GM23248 (cell line): ENCODE measurements at regions of chr1 and their contacts with region 1.

Region 1: DNA sequence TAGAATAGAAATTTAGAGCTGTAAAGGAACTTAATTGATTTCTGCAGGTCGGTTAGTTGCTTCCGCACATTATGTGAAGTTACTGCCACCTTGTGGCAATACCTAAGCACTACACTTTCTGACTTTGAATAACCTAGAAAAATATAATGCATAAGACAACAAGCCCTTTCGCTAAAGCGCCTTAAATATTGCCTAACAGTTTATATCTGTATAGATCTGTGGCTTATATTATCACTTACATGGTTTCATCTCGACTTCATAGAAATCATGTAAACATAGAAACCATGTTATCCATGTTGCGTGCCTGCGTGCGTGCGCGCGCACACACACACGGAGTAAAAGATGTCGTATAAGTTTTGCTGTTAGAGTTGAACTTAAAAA is 10.9 kb upstream of the IFI16 start:
- DNase-seq: peak; percentile 78
- H3K4me3 ChIP-seq: peak overlapping the region; percentile 83
- H3K27ac ChIP-seq: peak overlapping the region; percentile 95
- H3K4me1 ChIP-seq: peaks cover 17% of the 10 kb centered on the region
- H3K27me3 ChIP-seq: no peaks in the 10 kb centered on the region

Region 2: DNA sequence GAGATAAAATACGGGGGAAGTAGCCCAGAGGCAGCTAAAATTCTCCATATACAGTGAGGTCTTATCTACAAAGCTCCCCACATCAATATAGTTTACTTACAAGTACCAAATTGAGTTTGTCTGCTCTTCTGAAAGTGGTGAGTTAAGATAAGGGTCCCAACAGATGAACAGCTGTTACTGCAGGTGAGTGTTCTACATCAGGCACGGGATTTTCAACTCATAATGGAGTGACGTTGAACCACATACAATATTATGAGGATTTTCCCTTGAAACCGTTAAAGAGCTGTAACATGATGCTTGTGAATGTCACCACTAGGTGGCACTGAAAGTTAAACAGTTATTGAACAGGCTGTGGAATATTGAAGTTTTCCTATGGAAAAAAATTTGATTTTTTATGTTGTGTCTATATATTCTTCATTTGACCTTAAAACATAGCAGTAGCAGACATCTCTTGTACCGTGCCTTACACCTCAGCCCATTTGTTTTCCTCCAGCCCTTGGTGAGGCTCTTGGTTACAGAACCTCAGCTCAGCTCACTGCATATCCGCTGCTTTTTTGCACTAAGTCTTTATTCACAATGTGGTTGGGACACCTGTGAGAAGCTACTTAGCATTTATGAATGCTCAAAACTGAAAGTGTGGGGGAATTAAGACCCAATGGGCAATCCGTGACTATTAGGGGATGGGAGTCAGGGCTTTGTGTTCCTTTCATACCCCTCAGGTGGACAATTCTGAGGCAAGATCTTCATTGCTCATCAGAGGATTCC is 794.9 kb before region 1 on chr1:
- in situ Hi-C with region 1: loop called (anchors 25 kb)
- DNase-seq: peak; percentile 75
- H3K4me3 ChIP-seq: no peak overlapping the region
- H3K27ac ChIP-seq: no peak overlapping the region
- H3K4me1 ChIP-seq: no peaks in the 10 kb centered on the region
- H3K27me3 ChIP-seq: 0 out of 2 replicates have a peak, but pooled peaks cover 7% of the 10 kb centered on the region

Region 3: GRCh38 chr1:158552296-158552695 is 446.5 kb before region 1 on chr1:
- in situ Hi-C with region 1: no loop called
- DNase-seq: no peak
- H3K4me3 ChIP-seq: no peak overlapping the region
- H3K27ac ChIP-seq: no peak overlapping the region
- H3K4me1 ChIP-seq: no peaks in the 10 kb centered on the region
- H3K27me3 ChIP-seq: no peaks in the 10 kb centered on the region

Region 4: GRCh38 chr1:158961178-158961577 is 37.6 kb before region 1 on chr1:
- in situ Hi-C with region 1: no loop called
- DNase-seq: no peak
- H3K4me3 ChIP-seq: no peak overlapping the region
- H3K27ac ChIP-seq: no peak overlapping the region
- H3K4me1 ChIP-seq: no peaks in the 10 kb centered on the region
- H3K27me3 ChIP-seq: no peaks in the 10 kb centered on the region

Region 5: GRCh38 chr1:159113596-159114433 is 115.0 kb after region 1 on chr1:
- in situ Hi-C with region 1: no loop called
- DNase-seq: no peak
- H3K4me3 ChIP-seq: no peak overlapping the region
- H3K27ac ChIP-seq: no peak overlapping the region
- H3K4me1 ChIP-seq: no peaks in the 10 kb centered on the region
- H3K27me3 ChIP-seq: no peaks in the 10 kb centered on the region